GM10248 (cell line): ENCODE measurements at regions of chr19 and their contacts with region 1.

Region 1: DNA sequence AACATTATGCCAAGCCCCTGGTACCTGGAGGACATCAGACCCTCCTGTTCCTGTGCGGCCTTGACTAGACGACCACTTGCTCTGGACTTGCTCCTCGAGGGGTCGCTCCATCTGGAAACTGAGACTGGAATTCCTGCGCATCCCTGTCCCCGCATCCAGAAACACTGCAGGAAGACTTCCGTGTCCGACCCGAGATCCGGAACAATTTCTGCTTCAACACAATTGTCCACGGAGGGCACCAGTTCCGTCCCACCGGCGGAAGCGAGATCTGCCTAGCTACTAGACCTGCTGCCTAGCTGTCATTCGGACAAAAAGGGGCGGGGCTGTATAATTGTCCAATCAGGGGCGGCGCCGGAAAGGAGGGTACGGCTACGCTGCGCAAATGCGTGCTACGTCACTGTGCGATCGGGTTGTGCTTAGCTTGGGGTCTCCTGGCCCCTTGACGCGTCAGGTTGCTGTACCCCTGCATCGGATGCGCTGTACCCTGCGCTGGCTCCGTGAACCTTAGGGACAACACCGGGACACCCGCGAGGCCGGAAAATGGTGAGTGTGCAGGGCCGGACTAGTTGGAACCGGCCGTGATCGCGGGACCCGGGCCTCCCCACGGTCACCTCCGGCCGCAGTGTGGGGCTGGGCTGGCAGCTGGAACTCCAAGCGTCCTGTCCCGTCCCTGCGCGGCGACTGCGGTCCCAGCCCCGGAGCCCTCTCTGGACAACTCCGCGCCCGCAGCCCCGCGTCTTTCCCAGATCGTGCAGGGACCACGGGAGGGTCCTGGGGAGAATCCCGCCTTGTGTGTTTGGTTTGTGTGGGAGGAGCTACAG is at the starts of genes ZNF490 and ZNF791:
- DNase-seq: peak; percentile 96
- CTCF ChIP-seq: no peak

Region 2: GRCh38 chr19:11090054-11090900 is 1520.5 kb before region 1 on chr19:
- CTCF ChIA-PET with region 1: no interaction called
- POLR2A ChIA-PET with region 1: interaction called, 10 read pairs
- DNase-seq: peak; percentile 94
- CTCF ChIP-seq: peak; percentile 22

Region 3: GRCh38 chr19:12411893-12412292 is 198.9 kb before region 1 on chr19:
- CTCF ChIA-PET with region 1: no interaction called
- POLR2A ChIA-PET with region 1: no interaction called
- DNase-seq: no peak
- CTCF ChIP-seq: no peak

Region 4: DNA sequence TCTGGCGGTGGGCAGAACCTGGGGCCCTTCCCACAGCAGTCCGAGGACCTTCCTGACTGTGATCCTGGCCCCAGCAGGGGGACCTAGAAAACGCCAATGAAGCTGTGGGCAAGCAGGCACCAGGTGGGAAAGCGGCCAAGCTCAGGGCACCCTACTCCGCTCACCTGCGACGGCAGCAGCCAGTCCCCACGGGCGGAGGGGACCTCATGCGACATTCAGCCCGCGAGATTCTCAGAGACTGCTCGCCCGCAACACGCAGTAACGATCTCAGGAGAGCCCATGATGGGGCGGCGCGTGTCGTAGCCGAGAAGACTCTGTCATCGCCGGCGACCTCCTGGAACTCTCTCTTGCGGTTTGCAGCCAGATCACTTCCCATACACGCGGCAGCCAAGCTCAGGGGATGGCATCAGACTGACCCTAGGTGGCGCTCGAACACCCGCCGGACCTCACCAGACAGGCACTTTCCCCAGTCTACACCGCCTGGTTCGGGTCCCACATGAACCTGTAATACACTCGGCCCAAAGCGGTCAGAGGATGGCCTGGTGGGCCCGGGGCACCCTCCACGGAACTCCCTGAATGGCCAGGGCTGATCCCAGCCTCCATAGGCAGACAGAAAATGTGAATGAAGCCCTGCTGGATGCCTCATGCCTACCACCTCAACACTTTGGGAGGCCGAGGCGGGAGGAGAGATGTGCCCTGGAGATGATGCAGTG is 29.3 kb after region 1 on chr19:
- CTCF ChIA-PET with region 1: interaction called, 10 read pairs
- POLR2A ChIA-PET with region 1: interaction called, 8 read pairs
- DNase-seq: peak; percentile 91
- CTCF ChIP-seq: peak; percentile 65